Posterior vena cava (tissue), 2 donors: ENCODE measurements at regions of chr3 and their contacts with region 1.

Region 1: GRCh38 chr3:54538346-54538745 is 389.5 kb downstream of the LRTM1 start:
- DNase-seq: no peak

Region 2: DNA sequence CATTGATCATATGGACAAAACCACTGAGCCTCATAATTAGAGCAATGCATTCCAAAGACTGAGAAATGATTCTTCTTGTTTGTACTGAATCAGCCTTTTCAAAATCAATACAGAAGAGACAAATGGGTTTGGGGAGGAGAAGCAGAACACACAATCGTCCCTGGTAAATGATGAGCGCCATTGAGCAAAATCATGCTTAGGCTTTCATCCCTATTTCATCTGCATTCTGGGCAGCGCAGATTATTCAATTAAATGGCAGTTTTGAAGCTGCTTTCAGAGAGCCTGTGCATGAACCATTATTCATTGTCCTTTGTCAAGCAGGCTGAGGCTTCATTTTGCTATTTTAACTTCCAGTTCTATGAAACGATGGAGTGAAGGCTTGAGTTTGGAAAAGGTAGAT is 44.1 kb before region 1 on chr3:
- intact Hi-C with region 1: loop called in 1 of 2 experiments (anchors 2 kb)
- DNase-seq: no peak

Region 3: DNA sequence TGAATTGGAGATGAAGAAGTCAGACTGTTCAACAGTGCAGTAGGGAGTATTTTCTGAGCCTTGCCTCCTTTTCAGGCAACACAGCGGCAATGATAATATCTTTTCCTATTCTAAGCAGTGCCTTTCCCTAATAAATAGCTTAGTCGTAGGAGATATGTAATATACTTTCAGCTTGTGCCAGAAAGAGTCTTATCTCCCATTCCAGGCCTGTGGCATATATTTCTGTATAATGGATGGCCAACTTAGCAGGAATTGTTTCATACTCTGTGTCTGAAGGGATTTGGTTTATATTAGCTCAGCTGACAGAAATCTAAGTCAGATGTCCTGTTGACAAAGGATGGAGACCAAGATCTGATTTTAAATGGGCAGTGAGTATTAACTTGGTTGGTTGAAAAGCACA is 18.9 kb before region 1 on chr3:
- intact Hi-C with region 1: loop called in 1 of 2 experiments (anchors 1 kb)
- DNase-seq: no peak